ENCODE measurements at regions of chr2 and their contacts with region 1.

Region 1: DNA sequence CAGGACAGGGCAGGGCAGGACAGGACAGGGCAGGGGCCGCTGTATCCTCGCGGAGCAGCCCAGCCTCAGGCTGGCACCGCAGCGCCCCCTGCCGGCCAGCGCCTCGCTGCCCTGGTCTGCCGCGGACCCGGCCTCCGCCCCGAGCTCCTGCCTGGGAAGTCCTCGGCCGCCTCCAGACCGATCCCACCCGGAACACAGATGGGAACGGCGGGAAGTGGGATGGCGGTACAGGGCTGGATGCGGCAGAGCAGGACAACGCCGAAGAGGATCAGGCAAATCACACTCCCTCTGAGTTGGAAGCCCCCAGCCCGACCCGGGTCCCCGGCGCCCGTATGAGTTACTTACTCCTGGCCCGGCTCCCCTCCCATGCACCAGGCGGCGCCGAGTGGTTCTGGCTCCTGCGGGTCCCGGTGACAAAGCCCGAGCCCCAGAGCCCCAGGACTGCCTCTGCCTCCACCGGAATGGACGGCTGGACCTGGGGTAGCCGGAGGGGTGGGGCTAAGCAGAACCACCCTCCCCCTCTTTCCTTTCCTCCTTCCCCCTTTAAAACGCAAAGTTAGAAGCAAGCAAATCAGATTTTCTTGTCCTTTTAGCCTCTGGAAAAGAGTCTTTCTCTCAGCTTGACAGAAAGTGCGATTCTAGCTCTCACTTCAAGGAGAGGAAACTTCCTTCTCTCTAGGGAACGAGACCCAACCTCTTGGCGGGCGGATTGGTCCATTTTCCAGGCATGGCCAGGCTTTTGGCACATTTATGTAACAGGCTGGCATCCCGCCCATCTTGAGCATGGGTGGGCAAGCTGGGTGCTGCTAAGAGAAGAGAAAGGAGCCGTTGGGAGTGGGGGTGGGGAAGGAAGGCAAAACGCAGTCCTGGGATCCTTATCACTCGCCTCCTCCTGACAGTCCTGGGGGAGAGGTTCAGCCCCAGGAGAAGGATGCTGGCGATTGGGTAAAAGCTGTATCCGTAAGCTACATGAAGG is at the start of gene TP53I3:
- DNase-seq: peak; percentile 75 to 97
- H3K4me3 ChIP-seq: peak within 1 kb of the TSS; percentile 55 to 77 (median 66)
- H3K27ac ChIP-seq: peak within 1 kb of the TSS; percentile 89
- H3K4me1 ChIP-seq: peaks cover 4 to 11% (median 9%) of the 10 kb centered on the region in 4 experiments
- H3K27me3 ChIP-seq: no peaks in the 10 kb centered on the region
- CTCF ChIP-seq: peak; percentile 93 to 96 (median 93)
- EP300 ChIP-seq: peak in 1 of 2 experiments; percentile 65; a peak in 1 of 3 replicates
- POLR2A ChIP-seq: peak; percentile 90 to 92
- RAD21 ChIP-seq: peak; percentile 60 to 72
- total RNA-seq, gene TP53I3: 29.4 and 30.1 TPM in 2 replicates

Region 2: DNA sequence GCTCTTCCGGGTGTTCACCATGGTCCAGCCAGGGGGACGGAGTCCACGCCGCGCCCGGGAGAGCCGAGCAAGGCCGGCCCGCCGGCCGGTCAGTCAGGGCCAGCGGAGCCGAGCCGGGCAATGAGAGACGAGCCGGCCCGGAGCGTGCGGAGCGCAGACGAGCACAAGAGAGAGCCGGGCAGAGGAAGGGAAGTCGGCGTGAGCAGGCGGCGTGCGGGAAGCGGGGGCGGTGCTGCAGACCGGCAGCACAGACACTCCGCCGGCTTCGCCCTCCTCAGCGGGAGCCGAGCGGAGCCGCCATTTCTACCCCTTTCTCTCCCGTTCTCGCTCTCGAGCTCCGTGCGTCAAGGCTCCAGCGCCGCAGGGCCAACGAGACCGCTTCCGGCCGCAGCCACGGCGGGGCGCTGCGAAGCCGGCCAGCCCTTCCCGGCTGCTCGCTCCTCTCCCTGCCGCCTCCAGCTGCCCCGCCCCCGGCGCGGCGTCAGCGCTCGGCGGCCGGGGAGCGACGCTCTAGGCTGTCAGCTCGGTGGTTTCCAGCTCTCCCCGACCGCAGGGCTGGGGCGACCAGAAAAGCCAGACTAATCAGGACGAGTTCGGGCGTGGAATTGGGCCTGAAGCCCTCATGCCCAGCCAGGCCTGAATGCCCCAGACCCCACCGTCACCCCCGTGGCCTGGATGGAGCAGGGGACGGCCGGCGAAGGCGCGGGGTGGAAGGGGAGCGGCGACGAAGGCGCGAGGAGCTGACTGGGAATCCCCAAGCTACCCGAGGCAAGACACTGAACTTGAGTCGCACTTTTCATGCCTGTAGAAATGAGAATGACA is 157.7 kb before region 1 on chr2 and contains the start of gene ATAD2B:
- CTCF ChIA-PET with region 1: interaction called, 17 read pairs
- POLR2A ChIA-PET with region 1: interaction called, 18 read pairs
- DNase-seq: peak; percentile 85 to 97
- H3K4me3 ChIP-seq: peak within 1 kb of the TSS; percentile 69 to 90 (median 82)
- H3K27ac ChIP-seq: peak within 1 kb of the TSS; percentile 87
- H3K4me1 ChIP-seq: peaks cover 0 to 2% (median under 1%) of the 10 kb centered on the region in 4 experiments; a peak in 3 of 7 replicates
- H3K27me3 ChIP-seq: no peaks in the 10 kb centered on the region
- CTCF ChIP-seq: peak; percentile 87 to 96 (median 87)
- EP300 ChIP-seq: 0 out of 3 replicates have a peak, but pooled peaks of 1 of the 2 experiments have one; percentile 80
- POLR2A ChIP-seq: peak; percentile 85 to 94
- RAD21 ChIP-seq: peak; percentile 75 to 83
- total RNA-seq, gene ATAD2B: 15.3 and 16.1 TPM in 2 replicates

Region 3: DNA sequence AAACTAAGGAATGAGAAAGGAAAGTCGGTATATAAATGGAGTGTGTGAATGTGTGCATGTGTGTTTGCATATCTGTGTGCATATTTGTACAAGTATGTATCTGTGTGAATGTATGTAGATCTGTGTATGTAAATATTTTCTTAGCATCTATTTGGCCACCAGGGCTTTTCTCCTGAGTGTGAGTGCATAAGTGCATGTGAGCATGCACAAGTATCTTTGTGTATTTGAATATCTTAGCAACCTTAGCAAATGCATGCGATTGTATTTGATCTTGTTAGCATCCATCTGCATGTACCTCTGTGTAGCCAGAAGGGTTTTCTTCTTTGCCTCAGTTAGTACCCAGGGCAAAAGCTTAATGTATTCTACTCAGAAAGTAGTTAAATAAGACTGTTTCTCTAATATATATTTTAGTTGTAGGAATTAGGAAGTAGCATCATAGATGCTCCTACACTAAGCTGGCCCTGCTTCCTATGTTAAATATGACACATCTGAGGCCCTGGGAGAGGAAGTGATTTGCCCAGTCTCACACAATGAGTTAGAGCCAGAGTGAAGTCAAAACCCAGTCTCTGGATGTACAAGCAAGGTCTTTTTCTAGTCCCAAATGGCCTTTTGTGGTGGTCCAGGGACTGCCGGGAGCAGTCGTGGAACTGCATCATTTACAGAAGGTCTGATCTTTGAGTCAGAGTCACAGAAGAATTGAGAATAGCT is 26.0 kb before region 1 on chr2:
- CTCF ChIA-PET with region 1: interaction called, 25 read pairs
- POLR2A ChIA-PET with region 1: no interaction called
- DNase-seq: no peak
- H3K4me3 ChIP-seq: no peak overlapping the region
- H3K27ac ChIP-seq: no peak overlapping the region
- H3K4me1 ChIP-seq: no peaks in the 10 kb centered on the region
- H3K27me3 ChIP-seq: no peaks in the 10 kb centered on the region
- CTCF ChIP-seq: no peak
- EP300 ChIP-seq: no peak
- POLR2A ChIP-seq: no peak
- RAD21 ChIP-seq: no peak

Region 4: DNA sequence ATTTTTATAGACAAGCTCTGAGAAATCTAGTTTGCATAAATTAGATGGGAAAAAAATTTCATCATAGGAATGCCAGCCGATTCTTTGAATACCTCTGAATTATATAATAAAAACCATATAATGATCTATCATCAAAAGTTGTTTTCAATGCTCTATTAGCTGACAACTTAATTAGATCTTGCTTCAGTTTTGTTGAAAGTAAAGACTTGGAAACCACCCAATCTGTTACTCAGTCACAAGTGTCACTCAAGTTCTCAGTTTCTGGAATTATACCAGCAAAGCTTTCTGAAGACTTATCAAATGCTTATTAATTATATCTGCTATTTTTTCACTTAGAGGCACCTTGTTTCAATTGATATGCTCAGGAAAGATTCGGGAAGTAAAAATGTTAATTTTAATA is 17.3 kb after region 1 on chr2:
- CTCF ChIA-PET with region 1: interaction called, 4 read pairs
- POLR2A ChIA-PET with region 1: interaction called, 24 read pairs
- DNase-seq: no peak
- H3K4me3 ChIP-seq: no peak overlapping the region
- H3K27ac ChIP-seq: no peak overlapping the region
- H3K4me1 ChIP-seq: no peaks in the 10 kb centered on the region
- H3K27me3 ChIP-seq: no peaks in the 10 kb centered on the region
- CTCF ChIP-seq: no peak
- EP300 ChIP-seq: no peak
- POLR2A ChIP-seq: no peak
- RAD21 ChIP-seq: no peak

Region 5: DNA sequence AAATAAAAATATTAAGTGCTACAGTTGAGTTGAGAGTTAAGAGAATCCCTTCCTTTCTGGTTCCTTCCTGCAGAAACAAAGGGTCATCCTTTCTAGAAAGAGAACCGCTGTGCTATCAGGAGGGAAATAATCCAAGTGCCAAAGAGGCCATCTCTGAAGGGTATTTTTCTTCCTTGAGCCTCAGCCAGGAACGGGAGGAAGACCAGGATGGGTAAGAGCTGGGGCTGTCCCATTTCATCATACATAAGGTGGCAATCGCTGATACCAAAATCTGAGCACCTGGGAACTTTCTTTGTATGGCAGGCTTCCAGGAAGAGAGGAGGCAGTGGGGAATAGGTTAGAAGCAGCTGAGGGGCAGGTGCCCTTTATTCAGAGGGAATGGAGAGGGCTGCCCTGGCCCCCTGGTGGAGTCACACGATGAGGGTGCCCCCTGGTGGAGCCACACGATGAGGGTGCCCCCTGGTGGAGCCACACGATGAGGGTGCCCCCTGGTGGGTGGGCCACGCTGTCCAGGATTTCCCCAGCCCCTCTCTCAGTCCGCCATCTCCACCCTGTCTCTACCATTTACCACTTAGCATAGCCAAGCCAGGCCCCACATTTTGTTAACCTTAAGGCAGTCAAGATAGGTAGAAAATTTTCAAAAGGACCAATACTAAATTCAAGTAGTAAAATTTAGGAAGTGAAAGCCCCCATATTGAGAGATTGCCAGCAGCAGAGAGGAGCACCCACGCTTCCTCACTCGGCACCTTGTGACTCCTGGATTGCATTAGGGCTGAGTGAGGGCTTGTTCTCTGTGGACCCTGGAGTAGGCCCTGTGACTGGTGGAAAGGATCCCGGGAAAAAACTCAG is 79.7 kb after region 1 on chr2:
- CTCF ChIA-PET with region 1: interaction called, 16 read pairs
- POLR2A ChIA-PET with region 1: interaction called, 5 read pairs
- DNase-seq: peak; percentile 29 to 85
- H3K4me3 ChIP-seq: no peak overlapping the region
- H3K27ac ChIP-seq: no peak overlapping the region
- H3K4me1 ChIP-seq: no peaks in the 10 kb centered on the region; a peak in 1 of 7 replicates
- H3K27me3 ChIP-seq: no peaks in the 10 kb centered on the region
- CTCF ChIP-seq: peak; percentile 75 to 99 (median 77)
- EP300 ChIP-seq: no peak
- POLR2A ChIP-seq: no peak
- RAD21 ChIP-seq: peak; percentile 74 to 80

Region 6: DNA sequence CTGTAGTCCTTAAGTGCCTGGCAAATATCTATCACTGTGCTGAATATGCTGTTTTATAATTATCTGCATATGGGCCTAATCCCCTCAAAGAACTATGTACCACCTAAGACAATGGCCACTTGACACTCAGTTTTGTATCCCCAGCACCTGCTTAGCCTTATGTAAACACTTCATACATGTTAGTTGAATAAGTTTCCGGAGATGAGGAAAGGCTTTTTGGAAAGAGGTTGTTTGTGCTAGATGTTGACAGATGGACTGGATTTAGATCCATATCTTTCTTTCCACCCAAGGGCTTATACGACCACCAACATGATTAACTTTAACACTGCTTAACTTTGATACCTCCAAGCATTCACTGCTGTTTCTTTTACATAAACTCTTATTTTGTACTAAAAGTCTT is 153.5 kb after region 1 on chr2:
- CTCF ChIA-PET with region 1: no interaction called
- POLR2A ChIA-PET with region 1: no interaction called
- DNase-seq: no peak
- H3K4me3 ChIP-seq: no peak overlapping the region
- H3K27ac ChIP-seq: no peak overlapping the region
- H3K4me1 ChIP-seq: no peaks in the 10 kb centered on the region
- H3K27me3 ChIP-seq: no peaks in the 10 kb centered on the region
- CTCF ChIP-seq: no peak
- EP300 ChIP-seq: no peak
- POLR2A ChIP-seq: no peak
- RAD21 ChIP-seq: no peak